ENCODE measurements at regions of chr12 and their contacts with region 1.

Region 1: GRCh38 chr12:120469450-120470149 is at the start of gene SRSF9:
- DNase-seq: peak; percentile 97
- H3K4me3 Mint-ChIP-seq: peak within 1 kb of the TSS; percentile 95
- H3K27ac Mint-ChIP-seq: peak within 1 kb of the TSS; percentile 87
- H3K4me1 Mint-ChIP-seq: peaks cover 52% of the 10 kb centered on the region
- H3K27me3 Mint-ChIP-seq: peaks cover 2% of the 10 kb centered on the region
- total RNA-seq, gene SRSF9: 233 and 239 TPM in 2 replicates

Region 2: DNA sequence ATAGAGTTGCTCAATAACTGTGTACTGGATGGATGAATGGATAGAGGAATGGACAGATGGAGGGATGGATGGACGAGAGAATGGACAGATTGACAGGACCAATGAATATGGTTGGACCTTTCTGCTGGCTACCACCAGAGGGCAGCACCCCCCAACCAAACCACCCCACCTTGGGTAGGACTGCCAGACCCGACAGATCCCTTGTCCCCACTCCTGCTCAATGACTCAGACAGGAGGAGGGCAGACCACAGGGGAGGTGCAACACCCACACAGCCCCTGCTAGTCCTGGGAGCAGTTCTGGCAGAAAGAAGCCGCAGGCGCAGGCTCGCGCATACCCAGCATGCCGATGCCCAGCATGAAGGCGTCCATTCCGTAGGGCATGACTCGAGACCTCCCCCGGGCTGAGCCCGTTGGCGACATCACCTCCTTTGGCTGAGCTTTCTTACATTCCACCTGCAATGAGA is 113.0 kb before region 1 on chr12:
- intact Hi-C with region 1: loop called (anchors 1 kb)
- DNase-seq: peak; percentile 49
- H3K4me3 Mint-ChIP-seq: no peak overlapping the region
- H3K27ac Mint-ChIP-seq: no peak overlapping the region
- H3K4me1 Mint-ChIP-seq: no peaks in the 10 kb centered on the region
- H3K27me3 Mint-ChIP-seq: peaks cover 27% of the 10 kb centered on the region

Region 3: GRCh38 chr12:120445911-120446843 is 23.4 kb before region 1 on chr12 and contains the starts of genes GATC and TRIAP1:
- intact Hi-C with region 1: loop called (anchors 1 kb)
- DNase-seq: peak; percentile 87
- H3K4me3 Mint-ChIP-seq: peak within 1 kb of the TSS; percentile 97
- H3K27ac Mint-ChIP-seq: peak within 1 kb of the TSS; percentile 99
- H3K4me1 Mint-ChIP-seq: peaks cover 24% of the 10 kb centered on the region
- H3K27me3 Mint-ChIP-seq: no peaks in the 10 kb centered on the region
- total RNA-seq, gene GATC: 34.0 and 38.8 TPM in 2 replicates
- total RNA-seq, gene TRIAP1: 50.7 and 55.7 TPM in 2 replicates

Region 4: GRCh38 chr12:120528861-120529525 is 59.4 kb after region 1 on chr12 and contains the start of gene COQ5:
- intact Hi-C with region 1: loop called (anchors 2 kb)
- DNase-seq: peak; percentile 75
- H3K4me3 Mint-ChIP-seq: peak within 1 kb of the TSS; percentile 100
- H3K27ac Mint-ChIP-seq: peak within 1 kb of the TSS; percentile 99
- H3K4me1 Mint-ChIP-seq: peaks cover 28% of the 10 kb centered on the region
- H3K27me3 Mint-ChIP-seq: no peaks in the 10 kb centered on the region
- total RNA-seq, gene COQ5: 27.8 and 29.8 TPM in 2 replicates

Region 5: GRCh38 chr12:120710031-120710804 is 240.6 kb after region 1 on chr12 and contains the start of gene UNC119B:
- intact Hi-C with region 1: no loop called
- DNase-seq: peak; percentile 71
- H3K4me3 Mint-ChIP-seq: peak within 1 kb of the TSS; percentile 91
- H3K27ac Mint-ChIP-seq: peak within 1 kb of the TSS; percentile 89
- H3K4me1 Mint-ChIP-seq: peaks cover 37% of the 10 kb centered on the region
- H3K27me3 Mint-ChIP-seq: no peaks in the 10 kb centered on the region
- total RNA-seq, gene UNC119B: 24.2 and 24.6 TPM in 2 replicates